Heart left ventricle (tissue), 16 donors: ENCODE measurements at regions of chr17 and their contacts with region 1.

Region 1: DNA sequence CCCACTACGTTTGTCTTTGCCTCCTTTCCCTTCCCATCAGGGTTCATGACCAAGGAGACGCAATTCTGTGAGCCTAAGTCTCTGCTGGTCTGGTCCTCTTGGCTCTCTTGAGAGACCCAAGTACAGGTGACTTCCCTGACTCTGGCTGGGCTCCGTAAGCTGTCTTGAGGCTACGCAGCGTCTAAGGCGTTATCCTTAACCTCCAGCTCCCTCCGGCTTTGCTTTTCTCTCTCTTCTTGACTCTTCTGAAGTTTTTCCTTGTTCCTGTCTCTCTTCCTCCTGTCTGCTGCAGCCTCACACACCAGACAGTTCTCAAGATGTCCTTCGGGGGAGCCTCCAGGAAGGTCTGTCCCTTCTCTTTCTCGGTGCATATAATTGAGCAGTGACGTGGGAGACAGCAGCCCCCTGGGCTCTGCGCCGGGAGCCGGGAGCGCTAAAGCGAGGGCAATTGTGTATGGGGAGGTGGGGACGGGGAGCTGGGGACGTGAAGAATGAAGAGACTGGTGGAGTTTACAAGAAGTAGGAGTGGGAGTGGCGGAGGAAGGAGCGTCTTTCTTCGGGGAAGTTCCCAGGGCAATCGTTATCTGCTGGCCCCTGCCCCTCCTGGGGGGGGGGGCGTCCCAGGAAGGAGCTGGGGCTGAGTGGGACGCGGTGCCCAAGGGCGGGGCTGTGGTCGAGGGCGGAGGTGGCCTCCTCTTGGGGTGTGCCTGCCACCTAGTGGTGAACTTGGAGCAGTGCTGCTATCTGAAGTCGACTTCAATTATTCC is 6.9 kb upstream of the PIRT start:
- DNase-seq: peak; percentile 70 to 84 (median 76)
- ATAC-seq: peak; percentile 87 to 96 (median 92)
- H3K4me3 ChIP-seq: peak overlapping the region; percentile 26 to 60 (median 48)
- H3K27ac ChIP-seq: no peak overlapping the region
- H3K4me1 ChIP-seq: peaks cover 0 to 11% (median 0%) of the 10 kb centered on the region in 12 donors
- H3K27me3 ChIP-seq: peaks cover 0 to 9% (median 0%) of the 10 kb centered on the region in 9 donors
- CTCF ChIP-seq: peak; percentile 89 to 98 (median 94)
- POLR2A ChIP-seq: no peak

Region 2: DNA sequence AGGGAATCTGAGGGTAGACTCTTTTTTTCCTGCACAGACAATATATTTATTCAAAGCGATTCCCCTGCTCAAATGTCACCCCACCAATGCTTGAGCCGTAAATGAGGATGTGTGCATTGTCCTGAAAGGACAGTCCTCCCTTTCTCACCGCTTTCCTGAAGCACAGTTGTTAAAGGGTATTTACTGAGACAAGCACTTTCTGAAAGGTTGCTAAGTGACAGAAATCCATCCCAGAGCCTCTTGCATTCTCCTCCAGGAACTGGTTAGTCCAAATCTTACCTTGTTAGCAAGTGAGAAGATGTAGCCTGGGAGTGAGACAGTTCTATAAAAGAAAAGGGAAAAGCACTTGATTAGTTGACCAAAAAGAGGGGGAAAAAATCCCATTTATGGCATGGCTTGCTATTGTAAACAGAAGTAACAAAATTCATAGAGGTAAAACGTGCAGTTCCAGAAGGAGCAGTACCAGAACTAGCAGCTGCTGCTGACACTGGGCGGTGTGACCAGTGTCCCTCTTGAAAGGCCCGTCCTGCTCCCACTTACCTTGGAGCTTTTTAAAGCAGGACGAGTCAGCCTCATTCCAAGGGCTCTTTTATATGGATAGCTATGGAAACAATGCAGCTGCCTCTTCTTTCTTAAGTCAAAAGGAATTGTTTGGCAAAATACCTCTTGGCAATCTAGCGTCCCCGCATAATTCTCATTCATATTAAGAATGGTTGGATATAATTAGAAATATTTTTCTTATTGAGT is 295.5 kb before region 1 on chr17 and contains the start of gene MYH2:
- intact Hi-C with region 1: no loop called
- DNase-seq: no peak
- ATAC-seq: no peak
- H3K4me3 ChIP-seq: no peak within 1 kb of the TSS
- H3K27ac ChIP-seq: no peak within 1 kb of the TSS
- H3K4me1 ChIP-seq: no peaks in the 10 kb centered on the region
- H3K27me3 ChIP-seq: no peaks in the 10 kb centered on the region
- CTCF ChIP-seq: no peak
- POLR2A ChIP-seq: no peak
- total RNA-seq, gene MYH2: 0.07 to 0.40 TPM in 2 of 9 donors, not detected in the others

Region 3: DNA sequence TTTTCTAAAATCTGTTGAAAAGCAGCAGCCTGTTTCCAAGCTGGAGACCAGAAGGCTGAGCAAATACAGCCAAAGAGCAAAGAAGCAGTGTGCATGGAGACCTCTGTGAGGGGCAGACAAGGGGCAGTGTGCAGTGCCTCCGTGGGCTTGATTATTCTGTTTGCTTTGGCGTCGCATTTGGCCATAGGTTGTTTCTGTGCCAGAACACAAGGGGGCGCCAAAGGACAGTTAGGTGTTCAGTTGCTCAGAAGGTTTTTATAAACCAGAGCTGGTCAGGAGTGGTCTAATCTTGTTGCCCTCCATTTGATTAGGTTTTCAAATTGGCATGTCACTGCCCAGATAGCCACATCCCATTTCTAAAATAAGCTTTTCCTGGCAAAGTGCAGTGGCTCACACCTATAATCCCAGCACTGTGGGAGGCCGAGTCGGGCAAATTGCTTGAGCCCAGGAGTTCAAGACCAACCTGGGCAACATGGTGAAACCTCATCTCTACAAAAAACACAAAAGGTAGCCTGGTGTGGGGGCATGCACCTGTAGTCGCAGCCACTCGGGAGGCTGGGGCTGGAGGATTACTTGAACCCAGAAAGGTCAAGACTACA is 198.3 kb before region 1 on chr17:
- intact Hi-C with region 1: loop called (anchors 1 to 10 kb)
- DNase-seq: peak; percentile 63 to 80 (median 64)
- ATAC-seq: peak in 3 of 4 donors; percentile 51 to 73 (median 65)
- H3K4me3 ChIP-seq: no peak overlapping the region
- H3K27ac ChIP-seq: no peak overlapping the region
- H3K4me1 ChIP-seq: peaks cover 0 to 3% (median 0%) of the 10 kb centered on the region in 12 donors
- H3K27me3 ChIP-seq: no peaks in the 10 kb centered on the region
- CTCF ChIP-seq: peak; percentile 72 to 89 (median 83)
- POLR2A ChIP-seq: no peak

Region 4: DNA sequence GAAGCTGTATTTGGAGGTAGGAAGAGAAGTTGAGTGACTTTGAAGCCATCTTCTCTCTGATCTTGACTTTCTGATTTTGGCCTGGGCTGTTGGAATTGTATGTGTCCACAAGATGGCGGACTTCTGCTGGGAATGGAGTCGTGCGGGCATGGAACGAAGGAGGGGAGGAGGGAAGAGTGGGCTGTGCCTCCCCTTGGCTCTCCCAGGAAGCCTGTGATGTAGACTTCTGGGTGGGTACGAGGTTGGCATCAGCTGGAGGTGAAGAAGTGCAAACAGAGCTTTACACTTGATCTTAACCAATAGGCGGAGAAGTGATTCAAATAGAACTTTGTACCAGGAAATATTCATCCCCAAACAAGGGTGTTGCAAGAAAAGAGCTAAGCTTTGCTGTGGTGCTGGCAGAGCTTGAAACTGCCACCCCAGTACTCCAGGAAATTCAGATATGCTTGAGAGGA is 107.6 kb before region 1 on chr17:
- intact Hi-C with region 1: loop called (anchors 1 to 2 kb)
- DNase-seq: peak in 3 of 5 donors; percentile 40 to 48 (median 45)
- ATAC-seq: peak; percentile 54 to 83 (median 72)
- H3K4me3 ChIP-seq: no peak overlapping the region
- H3K27ac ChIP-seq: no peak overlapping the region
- H3K4me1 ChIP-seq: peaks cover 0 to 3% (median 0%) of the 10 kb centered on the region in 12 donors
- H3K27me3 ChIP-seq: no peaks in the 10 kb centered on the region
- CTCF ChIP-seq: peak; percentile 62 to 82 (median 70)
- POLR2A ChIP-seq: no peak

Region 5: GRCh38 chr17:10754109-10754508 is 90.7 kb before region 1 on chr17:
- intact Hi-C with region 1: loop called in 2 of 10 experiments (anchors 5 kb)
- DNase-seq: peak in 1 of 5 donors; percentile 34
- ATAC-seq: no peak
- H3K4me3 ChIP-seq: no peak overlapping the region
- H3K27ac ChIP-seq: no peak overlapping the region
- H3K4me1 ChIP-seq: peaks cover 0 to 6% (median 0%) of the 10 kb centered on the region in 12 donors
- H3K27me3 ChIP-seq: no peaks in the 10 kb centered on the region
- CTCF ChIP-seq: peak in 5 of 12 donors; percentile 8 to 35 (median 21)
- POLR2A ChIP-seq: no peak

Region 6: DNA sequence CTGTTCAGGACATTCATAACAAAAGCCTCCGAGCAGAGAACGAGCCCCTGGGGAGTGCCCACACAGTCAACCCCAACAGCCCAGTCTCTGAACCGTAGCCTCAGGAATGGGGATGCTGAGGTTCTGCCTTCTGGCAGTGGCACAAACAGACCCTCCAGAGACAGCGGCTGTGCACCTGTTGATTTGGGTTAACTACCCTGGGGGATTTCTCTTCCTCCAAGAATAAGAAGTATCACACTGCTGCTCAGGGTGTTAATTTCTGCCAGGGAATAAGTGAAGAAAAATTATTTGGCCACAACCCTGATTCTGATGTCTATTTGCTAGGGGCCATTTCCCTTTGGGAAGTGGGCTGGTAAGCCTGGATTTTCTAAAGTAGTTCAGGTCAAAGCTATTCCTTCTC is 44.1 kb after region 1 on chr17:
- intact Hi-C with region 1: no loop called
- DNase-seq: no peak
- ATAC-seq: no peak
- H3K4me3 ChIP-seq: no peak overlapping the region
- H3K27ac ChIP-seq: no peak overlapping the region
- H3K4me1 ChIP-seq: no peaks in the 10 kb centered on the region
- H3K27me3 ChIP-seq: peaks cover 0 to 11% (median 0%) of the 10 kb centered on the region in 9 donors
- CTCF ChIP-seq: no peak
- POLR2A ChIP-seq: no peak

Region 7: GRCh38 chr17:10920558-10921108 is 75.8 kb after region 1 on chr17:
- intact Hi-C with region 1: no loop called
- DNase-seq: no peak
- ATAC-seq: no peak
- H3K4me3 ChIP-seq: no peak overlapping the region
- H3K27ac ChIP-seq: no peak overlapping the region
- H3K4me1 ChIP-seq: no peaks in the 10 kb centered on the region
- H3K27me3 ChIP-seq: peaks cover 0 to 4% (median 0%) of the 10 kb centered on the region in 9 donors
- CTCF ChIP-seq: no peak
- POLR2A ChIP-seq: no peak